ENCODE measurements at regions of chr14 and their contacts with region 1.

Region 1: DNA sequence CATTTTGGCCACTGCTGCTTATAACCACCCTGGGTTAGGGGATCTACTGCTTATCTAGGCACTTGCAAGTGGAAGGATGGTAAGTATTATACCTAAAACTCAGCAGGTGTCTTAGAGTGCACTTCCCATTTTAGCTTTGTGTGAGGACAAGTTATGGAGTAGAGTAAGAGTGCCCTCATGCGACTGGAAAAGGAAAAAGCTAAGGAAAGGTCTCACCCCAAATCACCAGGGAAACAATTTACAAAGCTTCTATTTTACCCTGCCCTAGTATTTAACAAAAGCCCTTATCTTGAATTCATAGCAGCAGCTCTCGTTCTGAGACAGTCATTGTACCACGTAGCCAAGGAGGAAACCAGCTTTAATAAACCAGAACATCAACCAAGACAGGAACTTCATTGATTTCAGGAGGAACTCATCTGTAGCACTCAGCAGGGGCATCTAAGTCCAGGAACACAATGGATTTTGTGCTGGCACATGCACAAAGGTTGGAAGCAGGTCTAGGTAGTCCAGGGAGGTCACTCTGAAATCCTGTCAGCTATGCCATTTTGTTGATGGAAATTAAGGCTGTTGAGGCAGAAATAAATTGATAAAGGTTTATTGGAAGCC is 2.9 kb downstream of the RDH12 start:
- DNase-seq: peak; percentile 54
- ATAC-seq: peak; percentile 84
- H3K4me3 ChIP-seq: no peak overlapping the region
- H3K27ac ChIP-seq: no peak overlapping the region
- H3K4me1 ChIP-seq: peaks cover 23% of the 10 kb centered on the region
- H3K27me3 ChIP-seq: no peaks in the 10 kb centered on the region
- CTCF ChIP-seq: peak; percentile 85
- EP300 ChIP-seq: no peak
- POLR2A ChIP-seq: no peak
- RAD21 ChIP-seq: peak; percentile 61; the same call in 1 of the 2 replicates

Region 2: DNA sequence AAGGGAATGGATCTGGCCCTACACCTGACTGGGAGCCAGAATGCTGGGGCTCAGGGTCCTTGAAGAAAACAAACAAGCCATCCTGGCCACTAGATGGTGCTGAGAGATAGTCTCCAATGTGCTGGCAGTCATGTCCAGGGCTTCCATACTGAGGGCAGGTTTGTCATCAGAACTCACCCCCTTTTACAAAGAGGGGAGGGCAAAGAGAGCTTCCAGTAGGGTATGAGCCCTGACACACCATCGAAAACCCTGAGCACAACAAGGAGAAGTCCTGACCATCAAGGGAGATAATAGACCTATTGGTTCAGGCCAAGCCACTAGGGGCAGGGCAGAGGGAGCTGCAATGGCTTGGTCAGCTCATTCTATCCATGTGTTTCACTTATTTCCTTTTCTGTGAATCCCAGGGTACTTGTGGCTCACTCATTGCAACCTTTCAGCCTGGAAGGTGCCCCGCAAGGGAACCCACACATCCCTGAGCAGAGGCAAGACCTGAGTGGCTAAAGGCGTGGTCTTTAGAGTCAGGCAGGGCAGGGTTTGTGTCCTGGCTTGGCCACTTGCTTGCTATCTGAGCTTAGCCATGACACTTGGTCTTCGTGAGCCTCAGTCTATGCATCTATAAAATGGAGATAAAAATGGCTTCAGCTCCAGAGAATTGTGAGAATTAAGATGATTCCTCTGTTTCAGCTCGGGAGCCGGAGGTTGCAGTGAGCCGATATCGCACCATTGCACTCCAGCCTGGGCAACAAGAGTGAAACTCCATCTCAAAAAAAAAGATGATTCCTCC is 177.7 kb before region 1 on chr14:
- CTCF ChIA-PET with region 1: no interaction called
- POLR2A ChIA-PET with region 1: no interaction called
- in situ Hi-C with region 1: no loop called
- intact Hi-C with region 1: loop called (anchors 10 kb)
- DNase-seq: peak; percentile 43
- ATAC-seq: peak; percentile 96
- H3K4me3 ChIP-seq: no peak overlapping the region
- H3K27ac ChIP-seq: no peak overlapping the region
- H3K4me1 ChIP-seq: peaks cover 38% of the 10 kb centered on the region
- H3K27me3 ChIP-seq: peaks cover 0 to 14% of the 10 kb centered on the region in 2 experiments; a peak in 2 of 5 replicates
- CTCF ChIP-seq: peak; percentile 92
- EP300 ChIP-seq: no peak
- POLR2A ChIP-seq: no peak
- RAD21 ChIP-seq: peak; percentile 69

Region 3: DNA sequence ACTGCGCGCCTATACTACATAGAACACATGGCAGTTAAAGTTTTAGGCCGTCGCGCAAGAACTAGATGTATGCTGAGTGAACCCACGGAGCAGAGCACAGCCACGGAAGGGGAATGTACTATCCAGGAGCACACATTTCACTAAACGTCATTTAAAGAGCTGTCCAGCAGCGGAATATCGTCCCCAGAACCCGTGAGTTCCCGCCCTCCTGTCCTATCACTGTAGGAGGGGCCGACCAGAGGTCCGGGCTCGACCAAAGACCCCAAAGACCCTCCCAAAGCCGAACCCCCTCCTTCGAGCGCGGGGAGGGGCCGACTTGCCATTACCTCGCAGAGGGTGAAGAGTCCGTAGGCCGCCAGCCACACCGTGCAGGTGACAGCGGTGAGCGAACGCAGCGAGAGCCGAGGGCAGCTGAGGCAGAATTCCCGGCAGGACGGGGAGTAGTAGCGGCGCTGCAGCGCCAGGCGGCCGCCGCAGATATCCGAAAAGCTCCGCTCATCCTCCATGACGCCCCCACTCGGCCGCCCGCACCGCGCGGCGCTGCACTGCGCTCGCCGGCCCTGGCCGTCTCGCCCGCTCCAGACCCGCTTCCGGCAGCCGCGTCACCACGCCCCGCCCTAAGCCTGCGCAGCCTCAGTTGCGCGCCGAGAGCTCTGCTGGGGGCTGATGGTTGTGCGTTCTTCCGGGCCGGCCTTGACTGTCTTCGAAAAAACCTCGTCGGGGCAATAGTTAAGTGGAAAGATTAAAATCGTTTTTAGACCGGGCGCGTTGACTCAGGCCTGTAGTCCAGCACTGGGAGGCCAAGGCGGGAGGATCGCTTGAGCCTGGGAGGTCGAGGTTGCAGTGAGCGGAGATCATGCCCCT is 104.7 kb before region 1 on chr14 and contains the start of gene PIGH:
- CTCF ChIA-PET with region 1: interaction called, 11 read pairs
- POLR2A ChIA-PET with region 1: no interaction called
- in situ Hi-C with region 1: no loop called
- intact Hi-C with region 1: no loop called
- DNase-seq: peak; percentile 83
- ATAC-seq: peak; percentile 97
- H3K4me3 ChIP-seq: peak within 1 kb of the TSS; percentile 82 to 89 (median 87)
- H3K27ac ChIP-seq: peak within 1 kb of the TSS; percentile 74
- H3K4me1 ChIP-seq: peaks cover 43% of the 10 kb centered on the region
- H3K27me3 ChIP-seq: no peaks in the 10 kb centered on the region; a peak in 1 of 5 replicates
- CTCF ChIP-seq: peak; percentile 76
- EP300 ChIP-seq: peak in 1 of 2 experiments; percentile 42; a peak in 1 of 4 replicates
- POLR2A ChIP-seq: peak; percentile 62 to 72
- RAD21 ChIP-seq: peak; percentile 83
- total RNA-seq, gene PIGH: 18.7 and 30.0 TPM in 2 replicates

Region 4: DNA sequence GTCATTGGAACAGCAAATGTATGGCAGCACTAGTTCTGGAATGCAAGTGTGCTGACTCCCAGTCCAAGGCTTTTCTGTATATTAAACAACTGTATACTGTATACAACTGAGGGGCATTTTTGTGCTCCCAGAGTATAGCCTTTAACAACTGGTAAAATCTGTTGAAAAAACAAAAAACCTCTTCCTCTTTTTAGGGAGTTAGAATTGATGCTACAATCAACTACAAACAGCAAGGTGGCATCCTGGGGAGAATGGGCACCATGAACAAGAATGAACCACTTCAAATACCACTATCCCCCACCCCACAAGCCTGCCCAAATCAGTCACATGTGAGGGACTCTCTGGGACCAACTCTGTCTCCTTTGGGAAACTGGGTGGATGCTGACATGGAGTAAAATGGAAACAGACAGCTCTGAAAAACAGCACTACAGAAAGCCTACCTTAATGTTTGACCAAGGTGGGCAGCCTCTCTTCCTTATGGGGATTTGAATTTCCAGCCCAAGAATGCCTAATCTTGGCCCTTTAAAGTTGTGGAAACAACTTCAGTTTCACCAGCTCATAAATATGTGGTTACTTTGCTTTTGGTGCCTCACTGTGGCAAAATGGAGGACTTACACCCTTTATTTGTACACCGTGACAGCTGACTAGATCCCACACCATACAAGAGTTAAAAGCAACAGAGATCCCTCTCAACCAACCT is 37.7 kb before region 1 on chr14:
- CTCF ChIA-PET with region 1: interaction called, 3 read pairs
- POLR2A ChIA-PET with region 1: no interaction called
- in situ Hi-C with region 1: loop called (anchors 5 kb)
- intact Hi-C with region 1: loop called (anchors 1 kb)
- DNase-seq: peak; percentile 56
- ATAC-seq: peak; percentile 90
- H3K4me3 ChIP-seq: no peak overlapping the region
- H3K27ac ChIP-seq: no peak overlapping the region
- H3K4me1 ChIP-seq: no peaks in the 10 kb centered on the region
- H3K27me3 ChIP-seq: no peaks in the 10 kb centered on the region
- CTCF ChIP-seq: peak; percentile 83
- EP300 ChIP-seq: no peak
- POLR2A ChIP-seq: no peak
- RAD21 ChIP-seq: peak; percentile 80

Region 5: GRCh38 chr14:67766172-67766680 is 61.6 kb after region 1 on chr14:
- CTCF ChIA-PET with region 1: no interaction called
- POLR2A ChIA-PET with region 1: no interaction called
- in situ Hi-C with region 1: no loop called
- intact Hi-C with region 1: loop called (anchors 10 kb)
- DNase-seq: no peak
- ATAC-seq: peak; percentile 39; the same call in 2 of the 3 replicates
- H3K4me3 ChIP-seq: no peak overlapping the region
- H3K27ac ChIP-seq: no peak overlapping the region
- H3K4me1 ChIP-seq: peaks cover 18% of the 10 kb centered on the region
- H3K27me3 ChIP-seq: no peaks in the 10 kb centered on the region
- CTCF ChIP-seq: peak; percentile 43
- EP300 ChIP-seq: no peak
- POLR2A ChIP-seq: no peak
- RAD21 ChIP-seq: no peak

Measured in HepG2 (cell line).